IMR-90 (cell line): ENCODE measurements at regions of chr22 and their contacts with region 1.

Region 1: DNA sequence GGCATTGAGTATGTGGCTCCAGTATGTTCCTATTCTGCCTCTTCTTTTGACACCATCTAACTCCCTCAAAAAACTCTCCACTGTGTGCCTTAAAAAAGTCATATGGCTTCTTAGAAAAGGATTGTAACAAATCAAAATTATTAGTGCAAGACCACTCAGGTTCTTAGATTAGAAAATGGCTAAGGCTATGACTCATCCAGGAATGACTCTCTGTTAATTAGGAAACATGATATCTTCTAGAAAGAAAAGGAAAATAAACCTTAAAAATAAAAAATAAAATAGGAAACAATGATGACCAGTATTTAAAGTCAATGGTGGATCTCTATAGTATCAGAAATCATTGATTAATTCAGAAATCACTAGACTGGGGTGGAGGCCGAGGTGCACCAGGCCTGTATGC is 21.7 kb downstream of the SLC25A17 start:
- DNase-seq: peak; percentile 66
- ATAC-seq: peak; percentile 48
- H3K4me3 ChIP-seq: no peak overlapping the region
- H3K27ac ChIP-seq: peak overlapping the region; percentile 5; the same call in 1 of the 2 replicates
- H3K4me1 ChIP-seq: peaks cover 8% of the 10 kb centered on the region
- H3K27me3 ChIP-seq: no peaks in the 10 kb centered on the region
- CTCF ChIP-seq: no peak
- POLR2A ChIP-seq: no peak
- RAD21 ChIP-seq: no peak

Region 2: GRCh38 chr22:40764763-40765441 is 32.5 kb before region 1 on chr22:
- CTCF ChIA-PET with region 1: interaction called, 6 read pairs
- POLR2A ChIA-PET with region 1: no interaction called
- dilution Hi-C with region 1: no loop called
- in situ Hi-C with region 1: no loop called
- intact Hi-C with region 1: loop called (anchors 1 kb)
- DNase-seq: no peak
- ATAC-seq: no peak
- H3K4me3 ChIP-seq: no peak overlapping the region
- H3K27ac ChIP-seq: no peak overlapping the region
- H3K4me1 ChIP-seq: no peaks in the 10 kb centered on the region
- H3K27me3 ChIP-seq: no peaks in the 10 kb centered on the region
- CTCF ChIP-seq: no peak
- POLR2A ChIP-seq: no peak
- RAD21 ChIP-seq: no peak